Activated CD4-positive, alpha-beta T cell treated with anti-CD3 and anti-CD28 coated beads for 36 hours (primary cell): ENCODE measurements at regions of chr16 and their contacts with region 1.

Region 1: DNA sequence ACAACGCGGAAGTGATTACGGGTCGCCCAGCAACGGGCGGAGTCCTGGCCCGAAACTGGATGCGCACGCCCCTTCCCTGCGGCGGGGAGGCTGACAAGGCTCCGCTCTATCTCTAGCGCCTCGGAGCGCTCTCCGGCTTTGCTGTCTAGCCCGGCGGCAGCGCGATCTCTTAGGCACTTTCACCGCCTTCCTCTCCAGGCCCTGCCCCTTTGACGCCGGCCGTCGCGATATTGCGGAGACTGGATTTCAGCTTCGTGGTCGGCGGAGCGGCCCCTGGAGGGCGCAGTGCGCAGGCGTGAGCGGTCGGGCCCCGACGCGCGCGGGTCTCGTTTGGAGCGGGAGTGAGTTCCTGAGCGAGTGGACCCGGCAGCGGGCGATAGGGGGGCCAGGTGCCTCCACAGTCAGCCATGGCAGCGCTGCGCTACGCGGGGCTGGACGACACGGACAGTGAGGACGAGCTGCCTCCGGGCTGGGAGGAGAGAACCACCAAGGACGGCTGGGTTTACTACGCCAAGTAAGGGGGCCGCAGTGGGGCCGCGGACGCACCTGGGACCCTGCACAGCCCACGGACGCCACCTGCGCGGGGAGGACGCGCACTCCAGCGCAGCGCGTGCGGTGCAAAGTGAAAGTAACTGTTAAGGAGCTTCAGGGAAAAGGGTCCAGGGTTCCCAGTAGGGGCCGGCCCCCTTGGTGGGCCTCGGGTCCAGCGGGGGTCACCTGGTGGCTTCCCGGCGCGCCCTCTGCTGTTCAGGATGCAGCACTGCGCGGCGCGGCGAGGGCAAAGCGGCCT is at the start of gene WWOX:
- DNase-seq: peak; percentile 97
- ATAC-seq: peak; percentile 97
- H3K4me3 Mint-ChIP-seq: peak within 1 kb of the TSS; percentile 79
- H3K27ac Mint-ChIP-seq: peak within 1 kb of the TSS; percentile 86
- H3K4me1 Mint-ChIP-seq: peaks cover 13% of the 10 kb centered on the region
- H3K27me3 Mint-ChIP-seq: no peaks in the 10 kb centered on the region
- total RNA-seq, gene WWOX: 19.9 to 29.4 TPM

Region 2: DNA sequence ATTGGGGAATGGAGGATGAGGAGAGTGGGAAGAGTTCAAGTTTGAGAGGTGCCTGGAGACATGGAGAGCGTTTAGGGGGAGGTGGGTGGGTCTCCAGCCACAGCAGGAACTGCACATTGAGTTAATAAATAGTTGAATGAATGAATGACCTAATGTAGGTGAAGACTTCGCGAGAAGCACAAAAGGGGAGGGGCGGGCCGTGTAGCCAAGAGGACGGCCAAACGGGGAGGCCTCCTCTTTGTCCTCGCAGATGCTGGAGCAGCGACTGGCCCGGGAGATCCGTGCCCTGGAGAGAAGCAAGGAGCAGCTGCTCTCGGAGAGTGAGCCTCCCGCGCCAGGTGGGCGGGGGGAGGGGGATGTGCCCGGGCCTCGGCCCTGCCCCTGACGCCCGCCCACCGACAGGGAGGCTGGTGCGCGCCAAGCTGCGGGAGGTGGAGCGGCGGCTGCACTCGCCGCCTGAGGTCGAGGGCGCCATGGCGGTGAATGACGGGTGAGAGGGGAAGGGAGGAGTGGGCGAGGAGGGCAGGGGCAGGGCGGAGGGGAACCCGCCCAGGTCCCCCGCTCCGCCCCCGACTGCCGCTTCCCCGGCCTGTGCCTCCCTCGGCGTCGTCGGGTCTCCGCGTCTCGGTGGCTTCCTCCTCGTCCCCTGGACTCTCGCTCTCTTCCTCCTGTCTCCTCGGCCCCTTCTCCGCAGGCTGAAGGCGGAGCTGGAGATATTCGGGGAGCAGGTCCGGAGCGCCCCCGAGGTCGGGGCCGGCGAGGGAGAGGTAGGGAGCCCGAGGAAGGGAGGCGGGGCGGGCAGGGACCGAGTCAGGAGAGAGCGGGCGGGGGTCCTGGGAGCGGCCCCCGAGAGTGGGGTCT is 887.5 kb before region 1 on chr16:
- CTCF ChIA-PET with region 1: no interaction called
- POLR2A ChIA-PET with region 1: no interaction called
- intact Hi-C with region 1: loop called in 1 of 2 experiments (anchors 1 kb)
- DNase-seq: peak; percentile 88
- ATAC-seq: peak; percentile 85
- H3K4me3 Mint-ChIP-seq: peak overlapping the region; percentile 71
- H3K27ac Mint-ChIP-seq: peak overlapping the region; percentile 57
- H3K4me1 Mint-ChIP-seq: peaks cover 13% of the 10 kb centered on the region
- H3K27me3 Mint-ChIP-seq: no peaks in the 10 kb centered on the region

Region 3: GRCh38 chr16:77308163-77308561 is 791.4 kb before region 1 on chr16:
- CTCF ChIA-PET with region 1: no interaction called
- POLR2A ChIA-PET with region 1: no interaction called
- intact Hi-C with region 1: loop called in 1 of 2 experiments (anchors 10 kb)
- DNase-seq: no peak
- ATAC-seq: peak; percentile 95
- H3K4me3 Mint-ChIP-seq: no peak overlapping the region
- H3K27ac Mint-ChIP-seq: peak overlapping the region; percentile 73
- H3K4me1 Mint-ChIP-seq: peaks cover 28% of the 10 kb centered on the region
- H3K27me3 Mint-ChIP-seq: peaks cover 14% of the 10 kb centered on the region

Region 4: DNA sequence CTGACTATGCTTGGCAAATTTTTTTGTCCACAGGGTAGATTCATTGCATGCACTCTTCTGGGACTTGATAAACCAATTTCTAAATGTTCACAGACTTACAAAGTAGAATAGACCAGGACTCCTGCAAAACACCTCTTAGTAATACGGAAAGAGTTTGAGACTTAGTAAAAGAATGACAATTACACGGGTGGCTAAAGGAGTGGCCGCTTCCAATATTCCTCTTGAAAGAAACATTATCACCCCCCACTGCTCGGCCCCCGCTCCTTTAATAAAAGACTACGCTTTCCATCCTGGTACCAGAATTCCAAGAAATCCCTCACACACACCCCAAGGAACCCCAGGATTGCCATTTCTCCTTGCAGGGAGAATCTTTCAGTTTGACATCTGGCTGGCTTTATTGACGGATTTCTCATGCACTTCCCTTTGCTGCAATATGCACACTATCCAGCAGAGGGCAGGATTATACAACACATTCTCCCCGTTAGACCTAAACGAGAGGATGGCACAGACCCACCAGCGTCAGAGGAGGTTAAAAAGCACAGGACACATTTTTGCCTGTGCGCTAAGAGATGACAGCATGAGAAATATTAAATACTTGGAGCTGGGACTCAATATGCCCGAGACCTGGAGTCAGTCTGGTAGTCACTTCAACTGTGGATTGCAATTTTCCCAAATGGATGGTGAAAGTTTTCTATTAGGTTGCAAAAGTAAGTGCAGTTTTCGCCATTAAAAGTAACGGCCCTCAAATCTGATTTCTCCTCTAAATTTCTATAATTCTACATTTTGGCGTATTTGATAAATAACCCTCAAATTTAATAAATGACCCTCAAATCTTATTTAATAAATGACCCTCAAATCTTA is 423.9 kb before region 1 on chr16:
- CTCF ChIA-PET with region 1: interaction called, 4 read pairs
- POLR2A ChIA-PET with region 1: no interaction called
- intact Hi-C with region 1: loop called in 1 of 2 experiments (anchors 1 kb)
- DNase-seq: peak; percentile 77
- ATAC-seq: peak; percentile 55
- H3K4me3 Mint-ChIP-seq: no peak overlapping the region
- H3K27ac Mint-ChIP-seq: no peak overlapping the region
- H3K4me1 Mint-ChIP-seq: no peaks in the 10 kb centered on the region
- H3K27me3 Mint-ChIP-seq: peaks cover 11% of the 10 kb centered on the region

Region 5: DNA sequence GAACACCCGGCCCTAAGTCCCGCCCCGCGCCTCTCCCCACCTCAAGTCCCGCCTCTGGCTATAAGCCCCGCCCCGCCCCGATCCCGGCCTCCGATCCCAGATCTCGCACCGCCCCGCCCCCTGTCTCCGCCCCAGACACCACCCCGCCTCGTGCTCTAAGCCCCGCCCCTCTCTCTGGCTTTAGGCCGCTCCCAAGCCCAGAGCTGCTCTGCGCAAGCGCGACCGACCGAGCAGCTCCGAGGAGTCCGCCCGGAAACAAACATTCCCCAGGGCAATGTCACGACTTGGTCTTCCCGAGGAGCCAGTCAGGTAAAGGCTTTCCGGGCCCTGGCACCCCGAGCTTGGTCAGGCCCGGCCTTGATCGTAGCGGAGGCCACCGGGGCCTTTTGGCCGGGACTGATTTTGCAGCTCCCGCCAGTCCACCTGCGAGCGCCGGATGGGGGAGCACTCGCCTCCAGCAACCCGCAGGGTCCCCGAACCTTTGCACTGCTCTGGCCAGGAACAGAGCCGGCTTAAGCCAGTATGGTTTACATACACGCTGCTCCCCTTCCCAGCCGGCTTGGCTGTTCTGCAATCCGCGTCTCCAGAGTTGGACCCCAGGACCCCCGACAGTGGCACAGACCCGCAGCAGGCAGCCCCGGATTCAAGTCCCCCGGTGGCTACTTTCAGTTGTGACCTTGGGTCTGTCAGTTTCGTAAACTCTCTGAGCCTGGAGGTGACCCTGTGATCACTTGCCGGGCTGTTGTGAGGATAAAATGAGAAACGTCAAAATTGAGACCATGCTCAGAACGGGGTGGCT is 377.1 kb before region 1 on chr16 and contains the start of gene NUDT7:
- CTCF ChIA-PET with region 1: interaction called, 4 read pairs
- POLR2A ChIA-PET with region 1: no interaction called
- intact Hi-C with region 1: loop called (anchors 1 to 2 kb)
- DNase-seq: peak; percentile 100
- ATAC-seq: peak; percentile 97
- H3K4me3 Mint-ChIP-seq: peak within 1 kb of the TSS; percentile 80
- H3K27ac Mint-ChIP-seq: peak within 1 kb of the TSS; percentile 77
- H3K4me1 Mint-ChIP-seq: peaks cover 13% of the 10 kb centered on the region
- H3K27me3 Mint-ChIP-seq: no peaks in the 10 kb centered on the region
- total RNA-seq, gene NUDT7: 9.8 to 11.4 TPM

Region 6: DNA sequence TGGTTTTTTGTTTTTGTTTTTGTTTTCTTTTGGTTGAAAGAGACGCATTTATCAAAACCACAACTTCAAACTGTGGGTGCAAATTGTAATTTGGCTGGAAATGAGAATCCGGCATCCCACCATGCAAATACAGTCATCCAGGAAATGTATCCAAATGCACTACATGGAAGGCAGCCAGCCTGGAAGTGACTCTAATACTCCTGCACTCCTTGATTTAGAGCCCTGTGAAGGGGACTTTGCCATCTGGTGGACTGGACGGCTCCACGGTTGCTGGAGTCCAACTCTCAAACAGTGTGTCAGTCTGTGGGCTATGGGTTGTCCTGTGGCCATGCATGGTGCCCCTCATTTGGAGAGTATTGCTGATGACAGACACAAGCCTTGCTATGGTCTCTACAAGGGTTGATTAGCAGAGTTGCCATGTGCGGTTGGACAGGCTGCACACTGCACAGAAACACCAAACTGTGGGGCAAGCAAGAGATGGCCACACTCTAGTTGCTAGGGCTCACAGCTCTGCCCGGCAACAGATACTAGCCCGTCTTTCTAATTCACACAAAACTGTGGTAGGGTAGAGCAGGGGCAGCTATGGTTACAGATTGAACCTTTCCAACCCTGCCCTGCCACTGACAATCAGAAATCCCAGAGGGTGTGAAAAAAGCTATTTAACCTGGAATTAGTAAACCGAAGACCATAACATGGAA is 248.8 kb before region 1 on chr16:
- CTCF ChIA-PET with region 1: no interaction called
- POLR2A ChIA-PET with region 1: no interaction called
- intact Hi-C with region 1: no loop called
- DNase-seq: no peak
- ATAC-seq: no peak
- H3K4me3 Mint-ChIP-seq: no peak overlapping the region
- H3K27ac Mint-ChIP-seq: no peak overlapping the region
- H3K4me1 Mint-ChIP-seq: no peaks in the 10 kb centered on the region
- H3K27me3 Mint-ChIP-seq: peaks cover 16% of the 10 kb centered on the region

Region 7: DNA sequence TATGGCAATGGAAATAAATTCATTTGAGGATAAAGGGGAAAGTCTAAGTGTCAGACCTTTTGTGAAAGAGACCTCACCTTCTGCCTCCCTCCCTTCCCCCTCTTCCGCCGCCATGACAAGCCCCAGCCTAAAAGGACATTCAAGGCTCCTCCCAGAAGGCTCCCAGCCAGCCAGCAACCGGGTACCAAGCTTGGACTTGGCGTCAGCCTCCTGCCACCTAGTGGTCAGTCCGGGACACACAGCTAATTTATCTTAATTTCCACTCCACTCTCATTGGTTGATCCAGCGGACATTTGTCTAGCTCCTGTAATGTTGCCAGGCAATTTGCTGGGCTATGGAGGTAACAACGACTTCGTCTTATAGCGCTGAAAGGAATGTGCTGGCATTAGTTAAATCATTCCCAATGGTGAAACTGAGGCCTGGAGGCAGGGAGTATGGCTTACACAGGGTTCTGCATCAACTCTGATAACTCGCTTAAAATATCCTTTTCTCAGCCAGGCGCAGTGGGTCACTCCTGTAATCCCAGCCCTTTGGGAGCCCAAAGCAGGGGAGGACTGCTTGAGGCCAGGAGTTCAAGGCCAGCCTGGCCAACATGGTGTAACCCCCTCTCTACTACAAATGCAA is 96.5 kb before region 1 on chr16:
- CTCF ChIA-PET with region 1: no interaction called
- POLR2A ChIA-PET with region 1: no interaction called
- intact Hi-C with region 1: loop called (anchors 1 to 2 kb)
- DNase-seq: peak; percentile 90
- ATAC-seq: peak; percentile 99
- H3K4me3 Mint-ChIP-seq: no peak overlapping the region
- H3K27ac Mint-ChIP-seq: no peak overlapping the region
- H3K4me1 Mint-ChIP-seq: no peaks in the 10 kb centered on the region
- H3K27me3 Mint-ChIP-seq: peaks cover 16% of the 10 kb centered on the region